AG04450 (cell line): ENCODE measurements at regions of chr15 and their contacts with region 1.

Region 1: DNA sequence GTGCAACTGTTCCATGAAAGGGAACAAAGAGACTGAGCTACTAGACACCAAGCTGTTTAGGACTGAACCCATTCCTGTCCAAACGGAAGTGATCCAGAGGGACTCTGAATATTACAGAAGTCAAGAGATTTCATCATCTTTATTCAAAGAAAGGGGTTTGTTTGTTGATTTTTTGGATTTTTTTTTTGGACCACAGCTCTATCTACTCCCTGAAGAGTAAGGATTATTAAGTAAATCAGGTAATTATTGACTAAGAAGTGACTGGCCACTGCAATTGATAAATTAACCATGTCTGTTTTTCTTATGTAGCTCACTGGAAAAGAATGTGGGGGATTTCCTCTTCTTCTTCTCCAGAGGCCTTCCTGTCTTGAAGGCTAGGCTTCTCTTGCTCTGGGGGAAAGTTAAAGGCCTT is 146.6 kb upstream of the TPM1 start:
- DNase-seq: peak; percentile 72
- H3K4me3 ChIP-seq: no peak overlapping the region; the same call in 1 of the 2 replicates
- H3K27ac ChIP-seq: peak overlapping the region; percentile 100
- H3K27me3 ChIP-seq: no peaks in the 10 kb centered on the region
- CTCF ChIP-seq: no peak

Region 2: DNA sequence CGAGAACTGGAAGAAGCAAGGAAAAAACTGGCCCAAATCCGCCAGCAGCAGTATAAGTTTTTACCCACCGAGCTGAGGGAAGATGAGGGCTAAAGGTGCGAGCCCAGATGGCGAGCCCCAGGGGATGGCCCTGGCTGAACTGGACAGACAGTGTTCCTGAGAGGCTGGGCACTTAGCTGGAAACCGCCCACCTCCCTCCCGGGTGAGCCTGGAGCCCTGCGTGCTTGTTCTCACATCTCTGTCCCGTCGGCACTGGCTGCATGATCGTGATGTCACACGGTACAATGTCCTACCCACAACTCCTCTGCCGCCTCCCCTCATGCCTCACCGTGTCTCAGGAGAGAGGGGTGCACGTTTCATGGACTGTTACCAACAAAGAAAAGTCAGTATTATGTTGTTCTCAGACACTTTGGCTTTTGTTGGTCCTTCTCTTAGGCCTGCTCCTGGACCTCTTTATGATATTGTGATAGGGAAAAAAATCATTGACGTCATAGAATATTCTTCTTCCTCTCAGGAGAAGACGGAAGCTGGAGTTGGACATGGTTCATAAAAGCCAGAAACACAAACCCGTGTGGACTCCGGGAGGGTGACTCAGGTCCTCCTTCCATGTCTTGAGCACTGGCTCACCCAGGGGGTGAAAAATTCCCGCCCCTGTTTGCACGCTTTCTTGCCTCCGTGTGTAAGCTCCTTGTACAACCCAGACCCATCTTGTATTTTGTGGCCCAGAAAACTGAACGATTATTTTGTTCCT is 55.2 kb before region 1 on chr15:
- CTCF ChIA-PET with region 1: no interaction called
- POLR2A ChIA-PET with region 1: no interaction called
- DNase-seq: no peak
- H3K4me3 ChIP-seq: no peak overlapping the region
- H3K27ac ChIP-seq: peak overlapping the region; percentile 11
- H3K27me3 ChIP-seq: no peaks in the 10 kb centered on the region
- CTCF ChIP-seq: no peak

Region 3: DNA sequence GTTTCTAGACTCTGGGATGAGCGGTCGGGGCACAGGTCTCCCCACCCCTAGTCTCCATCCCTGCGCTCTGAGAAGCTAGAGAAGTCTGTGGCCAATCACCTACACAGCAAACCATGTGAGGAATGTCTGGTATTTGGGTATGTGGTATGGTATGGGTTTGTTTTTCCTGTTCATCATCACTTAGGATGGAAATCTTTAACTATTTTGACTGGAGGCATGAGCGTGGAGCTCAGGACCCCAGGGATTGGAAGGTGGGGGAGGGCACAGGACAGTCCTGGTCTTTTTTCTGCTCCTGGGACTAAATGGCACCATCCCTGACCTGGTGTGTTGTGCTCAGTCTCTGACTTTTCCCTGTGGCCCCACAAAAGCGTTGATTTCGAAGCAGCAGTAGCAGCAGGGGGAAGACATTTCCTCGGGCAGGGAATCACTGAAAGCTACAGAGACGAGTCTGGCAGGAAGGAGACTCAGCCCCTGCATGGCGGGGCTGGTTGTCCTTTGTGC is 45.1 kb before region 1 on chr15:
- CTCF ChIA-PET with region 1: no interaction called
- POLR2A ChIA-PET with region 1: interaction called, 12 read pairs
- DNase-seq: peak; percentile 56
- H3K4me3 ChIP-seq: no peak overlapping the region
- H3K27ac ChIP-seq: no peak overlapping the region
- H3K27me3 ChIP-seq: no peaks in the 10 kb centered on the region
- CTCF ChIP-seq: no peak

Region 4: GRCh38 chr15:62912808-62913207 is 16.9 kb after region 1 on chr15:
- CTCF ChIA-PET with region 1: no interaction called
- POLR2A ChIA-PET with region 1: no interaction called
- DNase-seq: no peak
- H3K4me3 ChIP-seq: no peak overlapping the region
- H3K27ac ChIP-seq: no peak overlapping the region
- H3K27me3 ChIP-seq: no peaks in the 10 kb centered on the region
- CTCF ChIP-seq: 0 out of 2 replicates have a peak, but pooled peaks have one; percentile 30

Region 5: DNA sequence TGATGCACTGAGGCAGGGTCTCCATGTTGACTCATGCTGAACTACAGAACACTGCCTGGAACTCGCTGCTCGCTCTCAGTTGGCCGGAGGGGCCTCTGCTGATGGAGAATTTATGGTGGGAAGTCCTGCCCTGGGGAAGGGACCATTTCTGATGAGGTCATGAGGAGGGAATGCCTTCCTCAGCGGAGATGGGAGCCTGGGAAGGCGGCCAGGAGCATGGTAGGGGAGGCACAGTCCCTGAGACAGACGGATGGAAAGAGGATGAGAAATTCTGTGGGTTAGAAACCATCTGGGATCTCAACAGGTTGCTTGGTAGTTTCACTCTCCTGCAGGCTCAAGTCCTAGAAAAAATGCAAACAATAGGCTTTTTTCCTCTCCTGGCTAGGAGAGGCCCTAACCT is 89.9 kb after region 1 on chr15:
- CTCF ChIA-PET with region 1: no interaction called
- POLR2A ChIA-PET with region 1: no interaction called
- DNase-seq: peak; percentile 43
- H3K4me3 ChIP-seq: no peak overlapping the region
- H3K27ac ChIP-seq: peak overlapping the region; percentile 12
- H3K27me3 ChIP-seq: no peaks in the 10 kb centered on the region
- CTCF ChIP-seq: no peak